Upper lobe of right lung (tissue), 1 donor: ENCODE measurements at regions of chr12 and their contacts with region 1.

Region 1: GRCh38 chr12:62562846-62563245 is 96.2 kb downstream of the MON2 start:
- DNase-seq: no peak
- ATAC-seq: no peak
- H3K4me3 ChIP-seq: no peak overlapping the region
- H3K27ac ChIP-seq: no peak overlapping the region
- H3K4me1 ChIP-seq: no peaks in the 10 kb centered on the region
- H3K27me3 ChIP-seq: no peaks in the 10 kb centered on the region
- CTCF ChIP-seq: no peak

Region 2: DNA sequence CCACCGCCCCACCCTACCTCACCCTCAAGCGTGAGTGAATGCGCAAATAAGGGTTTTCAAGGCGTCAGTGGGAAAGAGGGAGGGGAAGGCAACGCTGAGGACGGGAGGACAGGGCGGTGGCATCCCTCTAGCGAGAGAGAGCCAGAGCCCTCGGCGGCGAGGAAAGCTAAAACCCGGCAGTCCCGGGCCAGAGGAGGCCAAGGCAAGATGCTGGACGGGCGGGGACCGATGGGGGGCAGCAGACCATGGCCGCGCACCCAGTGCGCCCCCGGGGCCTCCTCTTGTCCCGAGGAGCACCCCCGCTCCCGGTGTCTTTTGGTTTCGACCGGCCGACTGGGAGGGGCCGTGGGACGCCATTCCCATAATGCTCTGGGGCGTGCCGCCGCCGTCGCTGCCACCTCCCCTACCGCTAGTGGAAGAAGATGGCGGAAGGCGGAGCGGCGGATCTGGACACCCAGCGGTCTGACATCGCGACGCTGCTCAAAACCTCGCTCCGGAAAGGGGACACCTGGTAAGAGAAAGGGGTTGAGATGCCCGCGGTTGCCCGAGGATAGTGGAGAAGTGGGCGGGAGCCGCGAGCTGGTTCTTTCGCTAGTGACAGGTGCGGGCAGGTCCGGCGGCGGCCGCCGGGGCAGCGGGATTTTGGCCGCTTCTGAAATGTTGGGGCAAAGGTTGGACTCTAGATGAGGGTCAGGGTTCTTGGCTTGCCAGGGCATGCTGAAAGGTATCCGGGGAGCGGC is 302.7 kb before region 1 on chr12 and contains the start of gene USP15:
- intact Hi-C with region 1: no loop called
- DNase-seq: peak; percentile 98
- ATAC-seq: peak; percentile 98
- H3K4me3 ChIP-seq: peak within 1 kb of the TSS; percentile 96
- H3K27ac ChIP-seq: peak within 1 kb of the TSS; percentile 96
- H3K4me1 ChIP-seq: peaks cover 41% of the 10 kb centered on the region
- H3K27me3 ChIP-seq: no peaks in the 10 kb centered on the region
- CTCF ChIP-seq: peak; percentile 80
- total RNA-seq, gene USP15: 87.3 TPM

Region 3: GRCh38 chr12:63056649-63057048 is 493.8 kb after region 1 on chr12:
- intact Hi-C with region 1: loop called (anchors 5 kb)
- DNase-seq: no peak
- ATAC-seq: no peak
- H3K4me3 ChIP-seq: no peak overlapping the region
- H3K27ac ChIP-seq: no peak overlapping the region
- H3K4me1 ChIP-seq: no peaks in the 10 kb centered on the region
- H3K27me3 ChIP-seq: no peaks in the 10 kb centered on the region
- CTCF ChIP-seq: no peak